ENCODE measurements at regions of chrX and their contacts with region 1.

Region 1: GRCh38 chrX:115226929-115227328 is 7.0 kb downstream of the LRCH2 start:
- DNase-seq: peak; percentile 25
- H3K4me3 Mint-ChIP-seq: no peak overlapping the region
- H3K27ac Mint-ChIP-seq: no peak overlapping the region
- H3K4me1 Mint-ChIP-seq: peaks cover 9% of the 10 kb centered on the region
- H3K27me3 Mint-ChIP-seq: no peaks in the 10 kb centered on the region
- CTCF ChIP-seq: peak; percentile 41

Region 2: DNA sequence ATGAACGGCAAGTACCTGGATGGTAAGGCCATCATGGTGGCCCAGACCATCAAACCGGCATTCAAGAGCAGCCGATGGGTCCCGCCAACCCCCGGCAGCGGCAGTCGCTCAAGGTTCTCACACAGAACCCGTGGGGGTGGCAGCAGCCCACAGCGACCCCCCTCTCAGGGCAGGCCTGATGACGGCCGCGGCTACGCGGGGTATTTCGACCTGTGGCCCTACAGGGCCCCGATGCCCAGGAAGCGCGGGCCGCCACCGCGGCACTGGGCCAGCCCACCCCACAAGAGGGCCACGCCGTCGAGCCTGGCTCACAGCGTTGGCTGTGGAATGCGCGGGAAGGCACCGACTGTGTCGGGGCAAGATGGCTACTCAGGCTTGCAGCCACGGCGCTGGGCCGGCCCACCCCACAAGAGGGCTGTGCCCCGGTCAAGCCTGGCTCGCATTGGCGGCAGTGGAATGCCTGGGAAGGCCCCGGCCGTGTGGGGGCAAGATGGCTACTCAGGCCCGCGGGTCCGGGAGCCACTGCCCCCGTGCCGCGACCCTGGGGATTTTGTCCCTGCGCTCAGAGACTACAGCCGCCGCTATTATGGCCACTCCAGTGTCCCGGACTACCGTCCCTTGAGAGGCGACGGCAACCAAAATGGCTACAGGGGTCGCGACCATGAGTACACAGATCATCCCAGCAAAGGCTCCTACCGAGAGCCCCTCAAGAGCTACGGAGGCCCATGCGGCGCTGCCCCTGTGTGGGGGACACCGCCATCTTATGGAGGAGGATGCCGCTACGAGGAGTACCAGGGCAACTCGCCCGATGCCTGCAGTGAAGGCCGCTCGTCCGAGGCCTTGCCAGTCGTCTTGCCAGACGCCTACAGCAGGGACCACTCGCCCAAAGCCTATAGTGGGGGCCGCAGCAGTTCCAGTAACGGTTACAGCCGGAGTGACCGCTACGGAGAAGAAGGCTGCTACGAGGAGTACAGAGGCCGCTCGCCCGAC is 37.0 kb before region 1 on chrX:
- CTCF ChIA-PET with region 1: no interaction called
- intact Hi-C with region 1: no loop called
- DNase-seq: no peak
- H3K4me3 Mint-ChIP-seq: no peak overlapping the region
- H3K27ac Mint-ChIP-seq: no peak overlapping the region
- H3K4me1 Mint-ChIP-seq: no peaks in the 10 kb centered on the region
- H3K27me3 Mint-ChIP-seq: no peaks in the 10 kb centered on the region
- CTCF ChIP-seq: no peak

Region 3: GRCh38 chrX:115268421-115268820 is 41.5 kb after region 1 on chrX:
- CTCF ChIA-PET with region 1: no interaction called
- intact Hi-C with region 1: loop called (anchors 1 kb)
- DNase-seq: peak; percentile 7
- H3K4me3 Mint-ChIP-seq: no peak overlapping the region
- H3K27ac Mint-ChIP-seq: no peak overlapping the region
- H3K4me1 Mint-ChIP-seq: no peaks in the 10 kb centered on the region
- H3K27me3 Mint-ChIP-seq: no peaks in the 10 kb centered on the region
- CTCF ChIP-seq: no peak

Region 4: DNA sequence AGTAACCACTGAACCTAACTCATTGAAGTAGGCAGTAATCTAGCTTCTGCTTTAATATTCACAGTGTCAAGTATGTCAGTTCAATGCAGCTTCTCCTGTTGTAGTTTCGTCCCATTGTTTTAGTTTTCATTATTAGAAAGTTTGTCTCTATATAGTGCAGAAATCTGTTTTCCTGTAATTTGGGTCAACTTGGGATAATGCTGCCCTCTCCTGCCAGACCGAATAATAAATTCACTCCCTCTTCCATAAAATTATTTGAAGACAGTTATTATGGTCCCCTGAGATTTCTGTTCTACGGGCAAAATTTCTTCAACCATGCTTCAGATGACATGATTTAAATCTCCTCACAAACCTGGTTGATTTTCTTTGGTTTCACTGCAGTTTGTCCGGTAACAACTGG is 57.9 kb after region 1 on chrX:
- CTCF ChIA-PET with region 1: no interaction called
- intact Hi-C with region 1: loop called (anchors 2 kb)
- DNase-seq: no peak
- H3K4me3 Mint-ChIP-seq: no peak overlapping the region
- H3K27ac Mint-ChIP-seq: no peak overlapping the region
- H3K4me1 Mint-ChIP-seq: no peaks in the 10 kb centered on the region
- H3K27me3 Mint-ChIP-seq: no peaks in the 10 kb centered on the region
- CTCF ChIP-seq: no peak

Region 5: DNA sequence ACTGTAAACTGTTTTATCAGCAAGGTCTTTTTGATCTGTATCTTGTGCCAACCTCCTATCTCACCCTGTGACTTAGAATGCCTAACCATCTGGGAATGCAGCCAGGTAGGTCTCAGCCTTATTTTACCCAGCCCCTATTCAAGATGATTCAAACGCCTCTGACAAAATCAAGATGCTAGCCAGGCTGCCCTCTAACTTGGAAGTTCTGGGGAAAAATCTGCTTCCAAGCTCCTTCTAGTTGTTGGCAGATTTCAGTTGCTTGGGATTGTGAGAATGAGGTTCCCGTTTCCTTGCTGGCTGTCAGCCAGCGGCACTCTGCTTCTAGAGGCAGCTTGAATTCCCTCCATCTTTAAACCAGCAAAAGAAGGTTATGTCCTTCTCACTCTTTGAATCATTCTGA is 97.3 kb after region 1 on chrX:
- CTCF ChIA-PET with region 1: no interaction called
- intact Hi-C with region 1: loop called (anchors 5 kb)
- DNase-seq: peak; percentile 0
- H3K4me3 Mint-ChIP-seq: no peak overlapping the region
- H3K27ac Mint-ChIP-seq: no peak overlapping the region
- H3K4me1 Mint-ChIP-seq: no peaks in the 10 kb centered on the region
- H3K27me3 Mint-ChIP-seq: no peaks in the 10 kb centered on the region
- CTCF ChIP-seq: no peak

Region 6: DNA sequence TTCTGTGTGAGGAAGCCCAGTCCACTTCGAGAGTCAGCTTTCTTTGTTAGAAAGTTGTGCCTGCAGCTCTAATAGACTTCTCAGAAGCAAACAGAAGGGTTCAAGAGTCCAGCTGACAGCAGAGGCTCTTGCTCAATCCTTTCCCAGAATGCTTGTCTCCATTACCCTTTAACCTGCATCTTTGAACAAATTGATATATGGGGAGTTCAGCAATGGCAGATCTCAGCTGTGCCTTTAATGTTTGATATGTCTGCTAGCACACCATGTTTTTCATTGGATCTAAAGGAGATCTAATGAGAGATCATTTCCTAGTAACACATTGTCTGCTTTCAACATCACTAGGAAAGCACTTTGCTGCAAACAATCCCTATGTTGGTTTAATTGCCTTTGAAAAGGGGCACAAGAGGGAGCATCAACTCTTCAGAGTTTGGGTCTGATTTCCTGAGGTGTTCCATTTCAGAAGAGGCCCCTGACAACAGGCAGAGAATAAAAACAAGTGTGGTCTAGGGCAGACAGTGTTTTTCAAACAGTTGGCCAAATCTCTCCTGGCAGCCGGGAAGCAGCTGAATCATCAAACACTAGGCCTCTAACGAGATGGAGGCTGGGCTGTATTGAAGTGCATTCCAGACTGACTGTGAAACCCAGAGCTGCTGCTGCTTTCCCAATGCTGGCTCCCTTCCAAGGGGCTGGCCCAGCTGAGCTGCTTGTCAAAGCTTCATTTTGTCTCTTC is 118.1 kb after region 1 on chrX:
- CTCF ChIA-PET with region 1: no interaction called
- intact Hi-C with region 1: no loop called
- DNase-seq: peak; percentile 80
- H3K4me3 Mint-ChIP-seq: no peak overlapping the region
- H3K27ac Mint-ChIP-seq: peak overlapping the region; percentile 54
- H3K4me1 Mint-ChIP-seq: peaks cover 11% of the 10 kb centered on the region
- H3K27me3 Mint-ChIP-seq: no peaks in the 10 kb centered on the region
- CTCF ChIP-seq: no peak

Region 7: GRCh38 chrX:115642895-115643530 is 416.1 kb after region 1 on chrX:
- CTCF ChIA-PET with region 1: no interaction called
- intact Hi-C with region 1: loop called (anchors 1 kb)
- DNase-seq: peak; percentile 38
- H3K4me3 Mint-ChIP-seq: no peak overlapping the region
- H3K27ac Mint-ChIP-seq: no peak overlapping the region
- H3K4me1 Mint-ChIP-seq: no peaks in the 10 kb centered on the region
- H3K27me3 Mint-ChIP-seq: no peaks in the 10 kb centered on the region
- CTCF ChIP-seq: peak; percentile 64

Region 8: DNA sequence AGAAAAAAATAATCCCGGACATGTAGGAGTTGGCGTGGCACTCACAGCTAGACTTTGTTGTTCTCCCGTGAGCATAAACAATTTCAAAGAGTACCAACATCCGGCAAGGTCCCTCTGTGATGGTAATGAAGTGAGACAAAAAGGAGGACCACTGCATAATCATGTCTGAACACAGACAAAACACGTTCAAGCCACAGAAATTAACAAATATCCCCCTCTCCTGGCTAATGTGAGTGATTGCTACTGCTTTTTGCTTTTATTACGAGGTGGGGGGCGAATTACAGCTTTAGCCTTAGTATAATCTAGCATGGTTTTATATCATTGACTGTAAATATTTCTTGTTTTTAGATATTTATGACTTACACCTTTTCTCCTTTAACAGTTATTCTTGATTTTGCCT is 452.5 kb after region 1 on chrX:
- CTCF ChIA-PET with region 1: interaction called, 3 read pairs
- intact Hi-C with region 1: loop called (anchors 2 kb)
- DNase-seq: no peak
- H3K4me3 Mint-ChIP-seq: no peak overlapping the region
- H3K27ac Mint-ChIP-seq: no peak overlapping the region
- H3K4me1 Mint-ChIP-seq: no peaks in the 10 kb centered on the region
- H3K27me3 Mint-ChIP-seq: no peaks in the 10 kb centered on the region
- CTCF ChIP-seq: no peak

Region 9: DNA sequence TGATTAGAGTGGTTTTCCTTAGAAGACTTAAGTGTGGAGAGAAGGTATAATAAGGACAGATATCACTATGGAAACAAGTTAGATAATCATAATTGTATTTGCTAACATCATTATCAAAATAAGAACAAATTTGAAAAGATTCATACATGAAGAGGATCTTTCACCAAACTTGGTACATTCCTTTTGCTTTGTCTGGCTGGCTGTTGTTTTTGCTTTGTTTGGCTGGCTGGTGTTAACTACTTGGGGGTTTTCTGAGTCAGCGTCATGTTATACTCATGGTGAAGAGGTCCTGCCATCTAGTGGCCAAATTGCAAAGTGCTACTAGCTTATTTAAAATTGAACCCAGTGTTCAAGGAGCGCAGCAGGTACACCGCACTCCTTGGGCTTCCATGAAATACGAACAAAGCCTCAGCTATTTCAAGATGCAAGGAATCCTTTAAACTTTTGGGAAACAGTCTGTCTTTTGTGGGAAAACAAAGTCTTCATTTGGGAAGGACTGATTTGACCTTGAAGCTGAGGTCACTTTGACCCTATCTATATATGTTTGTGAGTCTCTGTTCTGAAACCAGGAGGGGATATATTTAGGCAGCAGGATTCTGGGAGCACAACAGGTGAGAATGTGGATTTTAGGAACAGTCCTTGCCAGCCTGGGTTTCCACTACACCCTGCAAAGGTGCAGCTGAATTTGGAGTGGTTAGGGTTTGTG is 463.7 kb after region 1 on chrX:
- CTCF ChIA-PET with region 1: interaction called, 5 read pairs
- intact Hi-C with region 1: loop called (anchors 5 kb)
- DNase-seq: peak; percentile 45
- H3K4me3 Mint-ChIP-seq: no peak overlapping the region
- H3K27ac Mint-ChIP-seq: no peak overlapping the region
- H3K4me1 Mint-ChIP-seq: no peaks in the 10 kb centered on the region
- H3K27me3 Mint-ChIP-seq: no peaks in the 10 kb centered on the region
- CTCF ChIP-seq: no peak